Psoas muscle (tissue), 8 donors: ENCODE measurements at regions of chr17 and their contacts with region 1.

Region 1: GRCh38 chr17:82188001-82188961 is 24.4 kb downstream of the CCDC57 start:
- DNase-seq: peak in 1 of 2 donors; percentile 35
- ATAC-seq: no peak
- H3K4me3 ChIP-seq: no peak overlapping the region
- H3K27ac ChIP-seq: no peak overlapping the region
- H3K4me1 ChIP-seq: no peaks in the 10 kb centered on the region
- H3K27me3 ChIP-seq: no peaks in the 10 kb centered on the region
- CTCF ChIP-seq: no peak

Region 2: GRCh38 chr17:82129095-82129494 is 59.2 kb before region 1 on chr17:
- intact Hi-C with region 1: loop called in 1 of 2 experiments (anchors 5 kb)
- DNase-seq: no peak
- ATAC-seq: no peak
- H3K4me3 ChIP-seq: no peak overlapping the region
- H3K27ac ChIP-seq: no peak overlapping the region
- H3K4me1 ChIP-seq: no peaks in the 10 kb centered on the region
- H3K27me3 ChIP-seq: no peaks in the 10 kb centered on the region
- CTCF ChIP-seq: no peak

Region 3: DNA sequence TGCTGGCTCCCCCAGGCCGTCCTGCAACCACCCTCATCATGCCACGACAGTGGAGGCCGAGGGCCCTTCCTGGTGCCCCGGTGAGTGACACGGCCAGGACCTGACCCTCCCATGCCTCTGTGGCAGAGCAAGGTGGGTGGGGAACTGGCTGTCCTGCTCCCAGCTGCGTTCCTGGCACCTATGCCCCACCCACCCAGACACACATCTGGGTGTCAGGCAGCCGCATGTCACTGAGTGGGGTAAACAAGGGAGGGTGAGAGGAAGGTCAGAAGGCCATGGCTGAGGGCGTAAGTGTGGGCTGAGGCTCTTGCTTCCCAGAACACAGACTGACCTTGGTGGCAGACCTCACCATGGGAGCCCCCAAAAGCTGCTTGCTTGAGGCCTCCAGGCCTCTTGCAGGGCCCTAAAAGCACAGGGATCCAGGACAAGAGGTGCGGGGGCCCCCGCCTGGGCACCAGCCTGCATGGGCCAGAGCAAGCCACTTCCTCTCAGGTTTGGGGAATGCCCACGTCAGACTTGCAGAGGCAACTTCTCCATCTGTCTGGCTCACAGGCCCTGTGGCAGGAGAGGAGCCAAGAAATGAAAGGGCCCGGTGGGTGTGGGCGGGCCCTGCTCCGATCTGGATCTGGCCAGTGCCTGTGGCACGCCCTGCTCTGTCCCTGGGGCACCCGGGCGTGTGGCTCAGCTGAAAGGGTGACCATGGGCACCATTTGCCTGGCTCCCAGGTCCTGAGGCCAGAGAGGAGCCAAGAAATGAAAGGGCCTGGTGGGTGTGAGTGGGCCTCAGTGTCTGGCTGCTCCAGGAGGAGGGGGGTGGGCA is 28.2 kb after region 1 on chr17:
- intact Hi-C with region 1: no loop called
- DNase-seq: peak; percentile 77 to 85
- ATAC-seq: peak in 3 of 4 donors; percentile 17 to 57 (median 55)
- H3K4me3 ChIP-seq: no peak overlapping the region
- H3K27ac ChIP-seq: peak overlapping the region; percentile 53
- H3K4me1 ChIP-seq: peaks cover 21% of the 10 kb centered on the region
- H3K27me3 ChIP-seq: no peaks in the 10 kb centered on the region
- CTCF ChIP-seq: no peak

Region 4: GRCh38 chr17:82238472-82239201 is 50.4 kb after region 1 on chr17:
- intact Hi-C with region 1: no loop called
- DNase-seq: peak; percentile 68 to 78
- ATAC-seq: no peak
- H3K4me3 ChIP-seq: peak overlapping the region; percentile 32
- H3K27ac ChIP-seq: peak overlapping the region; percentile 73
- H3K4me1 ChIP-seq: peaks cover 92% of the 10 kb centered on the region
- H3K27me3 ChIP-seq: no peaks in the 10 kb centered on the region
- CTCF ChIP-seq: no peak